ENCODE measurements at regions of chr1 and their contacts with region 1.

Region 1: GRCh38 chr1:1665800-1666251 is 7.0 kb upstream of the CDK11B start:
- DNase-seq: peak; percentile 72
- ATAC-seq: peak; percentile 80
- H3K4me3 Mint-ChIP-seq: no peak overlapping the region
- H3K27ac Mint-ChIP-seq: no peak overlapping the region
- H3K4me1 Mint-ChIP-seq: no peaks in the 10 kb centered on the region
- H3K27me3 Mint-ChIP-seq: no peaks in the 10 kb centered on the region
- CTCF ChIP-seq: peak; percentile 48; the same call in 1 of the 2 replicates

Region 2: GRCh38 chr1:1578371-1578940 is 87.4 kb before region 1 on chr1:
- CTCF ChIA-PET with region 1: no interaction called
- POLR2A ChIA-PET with region 1: no interaction called
- DNase-seq: no peak
- ATAC-seq: no peak
- H3K4me3 Mint-ChIP-seq: no peak overlapping the region
- H3K27ac Mint-ChIP-seq: no peak overlapping the region
- H3K4me1 Mint-ChIP-seq: peaks cover 11% of the 10 kb centered on the region
- H3K27me3 Mint-ChIP-seq: peaks cover 21% of the 10 kb centered on the region
- CTCF ChIP-seq: no peak

Region 3: DNA sequence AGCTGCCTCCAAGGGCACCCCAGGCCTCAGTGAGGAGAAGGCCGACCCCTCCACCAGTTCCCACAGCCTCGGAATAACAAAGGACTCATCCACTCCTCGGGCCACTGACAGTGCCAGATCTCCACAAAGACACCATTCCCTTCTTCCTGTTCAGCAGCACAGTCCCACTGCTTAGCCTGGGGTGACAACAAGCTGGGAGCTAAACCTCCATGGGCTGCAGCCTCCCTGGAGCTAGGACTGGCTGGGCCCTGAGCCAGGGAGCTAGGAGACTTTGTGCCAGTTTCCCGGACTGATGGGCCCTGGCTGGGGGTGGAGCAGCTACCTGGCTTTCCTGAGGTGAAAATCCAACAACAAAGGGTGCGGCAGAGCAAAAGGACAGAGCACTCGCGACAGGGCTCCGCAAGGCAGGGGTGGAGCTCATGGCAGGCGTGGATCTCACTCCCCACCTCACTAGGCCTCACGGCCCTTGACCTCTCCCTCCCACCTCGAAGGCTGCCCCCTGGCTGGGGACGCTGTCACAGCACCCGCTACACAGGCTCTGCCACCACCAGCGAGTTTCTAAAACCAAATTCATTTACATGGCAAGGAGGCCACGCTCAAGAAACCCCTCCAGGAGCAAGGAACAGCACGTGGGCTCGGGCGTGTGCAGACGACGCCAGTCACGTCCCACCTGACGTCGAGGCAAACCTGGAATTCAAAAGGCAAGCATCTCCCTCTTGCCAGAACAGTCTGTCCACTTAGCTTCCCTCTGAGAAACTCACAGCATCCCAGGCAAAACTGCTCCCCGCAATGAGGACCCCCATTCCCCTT is 13.0 kb after region 1 on chr1:
- CTCF ChIA-PET with region 1: interaction called, 48 read pairs
- POLR2A ChIA-PET with region 1: no interaction called
- DNase-seq: peak; percentile 70
- ATAC-seq: peak; percentile 79
- H3K4me3 Mint-ChIP-seq: no peak overlapping the region
- H3K27ac Mint-ChIP-seq: peak overlapping the region; percentile 84
- H3K4me1 Mint-ChIP-seq: peaks cover 29% of the 10 kb centered on the region
- H3K27me3 Mint-ChIP-seq: no peaks in the 10 kb centered on the region
- CTCF ChIP-seq: peak; percentile 43; the same call in 1 of the 2 replicates